Activated B cell treated with CpG ODN at 0.5 μM for 24 hours (primary cell): ENCODE measurements at regions of chr7 and their contacts with region 1.

Region 1: GRCh38 chr7:139505563-139505962 is 17.9 kb upstream of the CLEC2L start:
- DNase-seq: no peak
- ATAC-seq: no peak
- H3K4me3 Mint-ChIP-seq: no peak overlapping the region
- H3K27ac Mint-ChIP-seq: no peak overlapping the region
- H3K4me1 Mint-ChIP-seq: no peaks in the 10 kb centered on the region
- H3K27me3 Mint-ChIP-seq: peaks cover 2% of the 10 kb centered on the region
- CTCF ChIP-seq: no peak

Region 2: DNA sequence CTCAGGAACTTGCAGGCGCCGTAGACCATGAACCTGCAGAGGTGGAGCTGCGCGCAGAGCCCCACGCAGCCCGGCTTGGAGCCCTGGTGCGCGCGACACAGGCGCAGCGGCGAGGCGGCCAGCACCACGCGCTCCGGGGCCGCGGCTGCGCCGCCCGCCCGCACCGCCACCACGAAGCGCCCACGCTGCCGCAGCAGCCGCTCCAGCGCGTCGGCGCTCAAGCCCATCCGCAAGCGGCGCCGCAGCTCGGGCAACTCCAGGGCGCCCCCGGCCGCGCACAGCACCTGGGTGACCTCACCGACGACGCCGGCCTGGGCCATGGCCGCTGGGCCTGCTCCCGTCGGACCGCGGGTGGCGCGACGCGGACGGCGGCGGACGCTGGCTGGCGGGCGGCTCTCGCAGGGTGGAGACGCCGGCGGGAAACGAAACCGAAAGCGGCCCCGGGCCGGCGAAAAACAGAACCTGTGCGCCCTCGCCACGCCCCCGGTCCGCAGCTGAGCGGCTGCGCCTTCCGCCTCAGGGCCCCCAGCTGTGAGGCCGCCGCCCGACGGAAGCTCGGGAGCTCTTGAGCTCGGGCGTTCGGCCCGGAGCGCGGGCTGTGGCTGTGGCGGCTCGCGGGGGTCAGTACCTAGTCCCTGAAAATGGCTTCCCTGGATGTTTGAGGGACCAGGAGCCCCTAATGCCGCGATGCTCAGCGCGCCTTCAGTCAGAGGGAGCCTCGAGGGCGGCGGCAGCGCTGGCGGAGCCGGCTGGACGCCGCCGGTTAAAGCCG is 557.2 kb after region 1 on chr7 and contains the start of gene PARP12:
- CTCF ChIA-PET with region 1: no interaction called
- POLR2A ChIA-PET with region 1: no interaction called
- intact Hi-C with region 1: no loop called
- DNase-seq: peak; percentile 93
- ATAC-seq: peak; percentile 81
- H3K4me3 Mint-ChIP-seq: peak within 1 kb of the TSS; percentile 97
- H3K27ac Mint-ChIP-seq: peak within 1 kb of the TSS; percentile 98
- H3K4me1 Mint-ChIP-seq: peaks cover 47% of the 10 kb centered on the region
- H3K27me3 Mint-ChIP-seq: no peaks in the 10 kb centered on the region
- CTCF ChIP-seq: no peak
- total RNA-seq, gene PARP12: 104 and 128 TPM in 2 replicates

Region 3: GRCh38 chr7:140342727-140343514 is 837.4 kb after region 1 on chr7:
- CTCF ChIA-PET with region 1: no interaction called
- POLR2A ChIA-PET with region 1: no interaction called
- intact Hi-C with region 1: loop called (anchors 10 kb)
- DNase-seq: no peak
- ATAC-seq: no peak
- H3K4me3 Mint-ChIP-seq: no peak overlapping the region
- H3K27ac Mint-ChIP-seq: no peak overlapping the region
- H3K4me1 Mint-ChIP-seq: peaks cover 4% of the 10 kb centered on the region
- H3K27me3 Mint-ChIP-seq: no peaks in the 10 kb centered on the region
- CTCF ChIP-seq: no peak